GM12878 (cell line): ENCODE measurements at regions of chr21 and their contacts with region 1.

Region 1: DNA sequence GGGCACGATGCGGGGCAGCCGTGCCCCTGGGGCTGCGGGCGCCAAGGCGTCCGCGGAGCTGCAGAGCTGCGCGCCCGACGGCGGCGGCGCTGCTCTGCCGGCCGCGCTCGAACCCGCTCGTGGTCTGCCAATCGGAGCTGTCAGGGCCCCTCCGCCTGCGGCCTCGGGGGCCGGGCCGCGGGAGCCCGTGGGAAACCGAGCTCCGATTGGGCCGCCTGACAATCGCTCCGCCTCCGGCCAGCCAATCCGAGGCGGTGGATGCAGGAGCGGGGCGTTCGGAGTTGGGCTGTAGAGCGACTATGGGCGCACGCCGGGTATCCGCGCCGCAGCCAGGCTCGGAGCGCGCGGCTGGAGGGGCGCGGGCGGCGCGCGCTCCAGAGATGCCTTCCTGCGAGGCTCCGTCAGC is 100.5 kb upstream of the SOD1 start:
- DNase-seq: peak; percentile 54
- ATAC-seq: peak; percentile 85
- H3K4me3 ChIP-seq: peak overlapping the region; percentile 53
- H3K27ac ChIP-seq: no peak overlapping the region
- H3K4me1 ChIP-seq: peaks cover 8% of the 10 kb centered on the region
- H3K27me3 ChIP-seq: peaks cover 0 to 5% of the 10 kb centered on the region in 2 experiments; a peak in 1 of 4 replicates
- CTCF ChIP-seq: peak; percentile 5 to 43 (median 22); a peak in 3 of 6 replicates
- EP300 ChIP-seq: no peak
- POLR2A ChIP-seq: no peak; the same call in 1 of the 2 replicates
- RAD21 ChIP-seq: no peak

Region 2: GRCh38 chr21:31509194-31510017 is 49.6 kb before region 1 on chr21:
- CTCF ChIA-PET with region 1: interaction called, 4 read pairs
- POLR2A ChIA-PET with region 1: interaction called, 3 read pairs
- RAD21 ChIA-PET with region 1: interaction called, 15 read pairs
- SMC1A ChIA-PET with region 1: interaction called, 4 read pairs
- in situ Hi-C with region 1: no loop called
- intact Hi-C with region 1: loop called (anchors 1 kb)
- DNase-seq: peak; percentile 41
- ATAC-seq: peak; percentile 70
- H3K4me3 ChIP-seq: no peak overlapping the region
- H3K27ac ChIP-seq: no peak overlapping the region; the same call in 1 of the 2 replicates
- H3K4me1 ChIP-seq: peaks cover 25% of the 10 kb centered on the region
- H3K27me3 ChIP-seq: no peaks in the 10 kb centered on the region
- CTCF ChIP-seq: peak; percentile 33 to 47 (median 39); a peak in 4 of 6 replicates
- EP300 ChIP-seq: peak; percentile 14 to 59; a peak in 2 of 4 replicates
- POLR2A ChIP-seq: no peak
- RAD21 ChIP-seq: no peak